HEK293 (cell line): ENCODE measurements at regions of chr2 and their contacts with region 1.

Region 1: DNA sequence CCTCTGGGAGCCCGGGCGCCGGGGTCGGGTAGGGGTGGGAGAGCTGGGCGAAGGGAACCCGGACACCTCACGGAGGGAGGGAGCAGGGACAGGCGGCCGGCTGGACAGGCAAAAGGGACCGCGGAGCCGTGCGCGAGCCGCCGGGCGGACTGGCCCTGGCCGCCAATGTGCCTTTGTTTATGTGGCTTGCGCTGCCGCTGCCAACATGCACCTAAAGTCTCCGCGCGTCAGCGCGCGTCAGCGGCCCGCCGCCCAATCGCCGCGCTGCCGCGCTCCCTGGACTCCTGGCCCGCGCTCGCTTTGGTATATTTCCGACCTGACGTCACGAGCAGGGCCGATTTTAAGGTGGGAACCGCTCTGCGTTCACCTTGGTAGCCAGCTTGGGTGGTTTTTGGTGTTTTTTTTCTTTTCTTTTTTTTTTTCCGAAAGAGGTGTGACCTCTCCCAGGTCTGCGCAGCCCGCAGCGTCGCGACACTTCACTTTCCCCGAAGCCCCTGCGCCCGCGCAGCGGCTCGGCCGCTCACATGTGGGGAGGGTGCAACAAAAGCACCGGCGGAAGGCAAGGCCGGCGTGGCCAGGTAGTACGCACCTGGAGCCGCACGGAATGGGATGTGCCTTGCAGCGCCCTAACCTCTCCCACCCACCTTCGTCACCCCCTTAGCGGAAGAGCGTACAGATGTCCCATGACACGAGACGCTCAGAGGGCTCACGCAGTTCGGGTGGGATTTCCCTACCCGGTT is at the start of gene NR4A2:
- H3K4me3 ChIP-seq: peak within 1 kb of the TSS; percentile 72
- H3K27ac ChIP-seq: peak within 1 kb of the TSS; percentile 96
- H3K4me1 ChIP-seq: no peaks in the 10 kb centered on the region
- CTCF ChIP-seq: peak; percentile 11; the same call in 1 of the 2 replicates

Region 2: GRCh38 chr2:156118753-156119416 is 213.8 kb before region 1 on chr2:
- CTCF ChIA-PET with region 1: no interaction called
- POLR2A ChIA-PET with region 1: no interaction called
- H3K4me3 ChIP-seq: no peak overlapping the region
- H3K27ac ChIP-seq: no peak overlapping the region
- H3K4me1 ChIP-seq: no peaks in the 10 kb centered on the region
- CTCF ChIP-seq: no peak

Region 3: DNA sequence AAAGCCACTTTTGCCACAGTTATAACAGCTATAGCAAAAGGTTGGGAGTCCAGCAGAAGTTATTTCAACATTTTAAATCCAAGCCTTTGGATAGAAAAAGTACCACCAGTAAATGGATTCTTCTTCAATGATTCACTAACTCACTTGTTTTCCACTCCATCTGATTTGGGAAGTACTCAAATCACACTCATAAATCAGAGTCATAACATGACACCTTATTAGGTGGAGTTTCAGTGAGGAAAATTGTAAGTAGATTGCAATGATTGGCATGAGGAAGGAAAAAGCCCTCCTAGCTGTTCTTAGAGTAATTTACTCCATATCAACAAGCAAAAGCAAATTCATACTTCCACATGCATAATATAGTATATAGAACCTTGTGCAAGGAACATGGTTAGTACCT is 133.1 kb before region 1 on chr2:
- CTCF ChIA-PET with region 1: no interaction called
- POLR2A ChIA-PET with region 1: no interaction called
- H3K4me3 ChIP-seq: no peak overlapping the region
- H3K27ac ChIP-seq: no peak overlapping the region
- H3K4me1 ChIP-seq: no peaks in the 10 kb centered on the region
- CTCF ChIP-seq: no peak

Region 4: DNA sequence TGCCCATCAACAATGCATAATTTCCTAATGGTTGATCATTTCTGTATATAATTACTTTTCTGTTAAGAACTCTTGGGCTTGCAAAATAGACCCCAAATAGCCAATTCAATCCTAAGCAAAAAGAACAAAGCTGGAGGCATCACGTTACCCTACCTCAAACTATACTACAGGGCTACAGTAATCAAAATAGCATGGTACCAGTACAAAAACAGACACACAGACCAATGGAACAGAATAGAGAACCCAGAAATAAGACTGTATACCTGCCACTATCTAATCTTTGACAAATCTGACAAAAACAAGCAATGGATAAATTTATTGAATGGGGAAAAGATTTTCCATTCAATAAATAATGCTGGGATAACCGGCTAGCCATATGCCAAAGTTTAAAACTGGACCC is 78.9 kb before region 1 on chr2:
- CTCF ChIA-PET with region 1: no interaction called
- POLR2A ChIA-PET with region 1: no interaction called
- H3K4me3 ChIP-seq: peak overlapping the region; percentile 50
- H3K27ac ChIP-seq: no peak overlapping the region
- H3K4me1 ChIP-seq: no peaks in the 10 kb centered on the region
- CTCF ChIP-seq: no peak

Region 5: GRCh38 chr2:156400706-156401678 is 68.3 kb after region 1 on chr2:
- CTCF ChIA-PET with region 1: interaction called, 17 read pairs
- POLR2A ChIA-PET with region 1: interaction called, 19 read pairs
- H3K4me3 ChIP-seq: peak overlapping the region; percentile 77
- H3K27ac ChIP-seq: peak overlapping the region; percentile 6; the same call in 1 of the 2 replicates
- H3K4me1 ChIP-seq: no peaks in the 10 kb centered on the region
- CTCF ChIP-seq: no peak

Region 6: DNA sequence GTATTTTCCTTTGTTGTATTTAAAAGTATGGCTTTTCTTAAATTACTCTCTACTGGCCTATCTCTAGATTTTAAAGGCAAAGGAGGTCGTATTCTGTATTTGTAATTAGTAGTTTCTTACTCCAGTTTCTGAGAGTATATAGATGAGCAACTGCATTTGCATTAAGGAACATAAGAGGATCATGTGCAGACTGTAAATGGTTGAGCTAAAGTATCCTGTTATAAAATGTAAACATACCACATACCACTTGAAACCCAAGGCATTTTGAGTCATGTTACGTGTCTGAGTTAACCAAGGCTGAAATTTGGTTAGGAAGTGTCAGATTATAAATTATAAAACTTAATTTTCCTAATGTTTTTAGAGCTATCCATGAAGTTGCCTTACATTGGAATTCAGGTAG is 179.7 kb after region 1 on chr2:
- CTCF ChIA-PET with region 1: no interaction called
- POLR2A ChIA-PET with region 1: no interaction called
- H3K4me3 ChIP-seq: no peak overlapping the region
- H3K27ac ChIP-seq: no peak overlapping the region
- H3K4me1 ChIP-seq: no peaks in the 10 kb centered on the region
- CTCF ChIP-seq: no peak

Region 7: GRCh38 chr2:156589381-156590079 is 256.8 kb after region 1 on chr2:
- CTCF ChIA-PET with region 1: interaction called, 28 read pairs
- POLR2A ChIA-PET with region 1: no interaction called
- H3K4me3 ChIP-seq: no peak overlapping the region
- H3K27ac ChIP-seq: no peak overlapping the region
- H3K4me1 ChIP-seq: peaks cover 10% of the 10 kb centered on the region
- CTCF ChIP-seq: no peak